Heart right ventricle (tissue), 16 donors: ENCODE measurements at regions of chr21 and their contacts with region 1.

Region 1: GRCh38 chr21:29849735-29850176 is 90.0 kb downstream of the GRIK1 start:
- DNase-seq: peak in 1 of 2 donors; percentile 39
- ATAC-seq: peak; percentile 69 to 92 (median 77)
- H3K4me3 ChIP-seq: no peak overlapping the region
- H3K27ac ChIP-seq: no peak overlapping the region
- H3K4me1 ChIP-seq: no peaks in the 10 kb centered on the region
- H3K27me3 ChIP-seq: peaks cover 0 to 11% (median 0%) of the 10 kb centered on the region in 7 donors
- CTCF ChIP-seq: peak; percentile 35 to 81 (median 71)

Region 2: DNA sequence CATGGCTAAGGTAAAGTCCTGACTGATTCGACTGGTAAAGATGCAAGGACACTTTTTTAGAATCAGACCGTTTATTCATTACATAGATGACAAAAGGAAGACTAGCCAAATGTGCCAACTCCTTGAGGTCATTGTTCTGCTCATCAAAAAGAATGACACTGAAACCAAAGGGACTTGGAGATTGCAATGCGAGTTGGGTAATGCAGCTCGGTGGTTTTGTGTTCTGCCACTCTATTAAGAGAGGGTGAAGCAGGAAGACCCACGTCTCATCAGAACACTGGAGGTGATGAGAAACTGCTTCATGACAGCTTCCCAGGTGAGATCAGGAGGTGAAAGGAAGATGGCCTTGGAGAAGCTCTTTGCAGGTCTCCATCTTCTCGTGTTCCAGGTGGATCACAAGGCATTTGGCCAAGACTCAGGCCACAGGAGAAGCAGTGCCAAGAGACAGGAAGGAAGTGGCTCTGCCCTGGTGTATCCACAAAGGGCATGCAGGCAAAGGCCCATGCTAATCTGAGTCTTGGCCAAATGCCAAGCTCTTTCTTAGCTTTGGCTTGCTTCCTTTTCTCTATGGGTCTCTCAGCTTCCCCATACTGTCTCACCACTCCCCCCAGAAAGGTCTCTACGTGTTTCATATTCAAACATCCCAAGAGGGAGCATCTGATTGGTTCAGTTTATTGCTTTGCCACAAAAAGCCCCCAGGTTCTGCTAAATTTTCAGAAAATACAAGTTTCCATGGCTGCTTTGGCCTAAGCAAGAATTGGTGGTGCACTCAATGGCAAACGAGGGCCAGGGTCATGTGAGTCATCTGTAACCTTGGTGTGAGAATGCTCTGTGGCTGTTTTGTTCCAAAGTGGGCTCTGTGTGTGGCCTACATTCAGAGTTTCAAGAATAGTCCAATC is 770.6 kb before region 1 on chr21:
- intact Hi-C with region 1: loop called in 1 of 10 experiments (anchors 10 kb)
- DNase-seq: peak in 1 of 2 donors; percentile 32
- ATAC-seq: peak in 4 of 8 donors; percentile 28 to 40 (median 31)
- H3K4me3 ChIP-seq: no peak overlapping the region
- H3K27ac ChIP-seq: peak overlapping the region in 2 of 10 donors; percentile 6 to 93
- H3K4me1 ChIP-seq: peaks cover 0 to 49% (median 21%) of the 10 kb centered on the region in 9 donors
- H3K27me3 ChIP-seq: no peaks in the 10 kb centered on the region
- CTCF ChIP-seq: no peak

Region 3: DNA sequence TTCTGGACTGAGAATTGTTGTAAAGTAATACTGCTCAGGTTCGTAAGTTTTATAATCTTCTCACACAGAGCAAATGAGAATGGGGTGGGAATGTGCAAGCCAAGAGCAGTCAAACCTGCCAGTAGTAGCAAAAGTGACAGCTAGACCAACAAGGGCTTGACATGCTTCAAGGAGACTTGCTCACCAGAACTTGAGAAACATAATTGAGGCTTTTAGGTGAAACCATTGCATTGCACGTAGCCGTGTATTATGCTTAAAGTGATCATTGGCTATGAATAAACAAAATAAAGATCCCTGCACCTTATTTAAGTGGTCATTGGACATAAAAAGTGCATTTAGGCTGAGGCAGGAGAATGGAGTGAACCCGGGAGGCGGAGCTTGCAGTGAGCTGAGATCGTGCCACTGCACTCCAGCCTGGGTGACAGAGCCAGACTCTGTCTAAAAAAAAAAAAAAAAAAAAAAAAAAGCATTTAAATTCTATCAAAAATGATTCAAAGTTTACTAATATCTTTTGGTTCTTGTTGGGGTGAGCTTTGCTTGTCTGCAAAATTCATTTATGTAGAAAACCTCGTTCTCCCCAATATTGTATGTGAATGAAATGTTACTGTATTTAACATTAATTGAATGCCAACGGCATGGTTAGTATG is 764.5 kb before region 1 on chr21:
- intact Hi-C with region 1: loop called in 4 of 10 experiments (anchors 5 to 10 kb)
- DNase-seq: no peak
- ATAC-seq: no peak
- H3K4me3 ChIP-seq: no peak overlapping the region
- H3K27ac ChIP-seq: peak overlapping the region in 2 of 10 donors; percentile 19 to 31
- H3K4me1 ChIP-seq: peaks cover 0 to 34% (median 24%) of the 10 kb centered on the region in 9 donors
- H3K27me3 ChIP-seq: no peaks in the 10 kb centered on the region
- CTCF ChIP-seq: no peak

Region 4: GRCh38 chr21:29470397-29470796 is 379.4 kb before region 1 on chr21:
- intact Hi-C with region 1: loop called in 6 of 10 experiments (anchors 5 to 10 kb)
- DNase-seq: no peak
- ATAC-seq: no peak
- H3K4me3 ChIP-seq: no peak overlapping the region
- H3K27ac ChIP-seq: no peak overlapping the region
- H3K4me1 ChIP-seq: no peaks in the 10 kb centered on the region
- H3K27me3 ChIP-seq: no peaks in the 10 kb centered on the region
- CTCF ChIP-seq: no peak

Region 5: DNA sequence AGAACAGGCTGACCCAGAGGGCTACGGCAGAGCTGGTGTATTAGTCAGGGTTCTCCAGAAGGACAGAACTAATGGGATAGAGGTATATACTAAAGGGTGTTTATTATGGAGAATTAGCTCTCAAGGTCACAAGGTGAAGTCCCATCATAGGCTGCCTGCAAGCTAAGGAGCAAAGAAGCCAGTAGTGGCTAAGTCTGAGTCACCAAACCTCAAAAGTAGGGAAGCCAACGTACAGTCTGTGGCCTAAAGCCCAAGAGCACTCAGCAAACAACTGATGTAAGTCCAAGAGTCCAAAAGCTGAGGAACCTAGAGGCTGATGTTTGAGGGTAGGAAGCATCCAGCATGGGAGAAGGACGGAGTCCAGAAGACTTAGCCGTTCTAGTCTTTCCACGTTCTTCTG is 371.8 kb before region 1 on chr21:
- intact Hi-C with region 1: loop called (anchors 1 to 10 kb)
- DNase-seq: no peak
- ATAC-seq: no peak
- H3K4me3 ChIP-seq: no peak overlapping the region
- H3K27ac ChIP-seq: no peak overlapping the region
- H3K4me1 ChIP-seq: peaks cover 0 to 5% (median 0%) of the 10 kb centered on the region in 9 donors
- H3K27me3 ChIP-seq: no peaks in the 10 kb centered on the region
- CTCF ChIP-seq: no peak

Region 6: GRCh38 chr21:29786496-29787360 is 63.0 kb before region 1 on chr21:
- intact Hi-C with region 1: no loop called
- DNase-seq: no peak
- ATAC-seq: no peak
- H3K4me3 ChIP-seq: no peak overlapping the region
- H3K27ac ChIP-seq: no peak overlapping the region
- H3K4me1 ChIP-seq: no peaks in the 10 kb centered on the region
- H3K27me3 ChIP-seq: no peaks in the 10 kb centered on the region
- CTCF ChIP-seq: no peak